Mammary epithelial cell (primary cell): ENCODE measurements at regions of chr20 and their contacts with region 1.

Region 1: GRCh38 chr20:45011108-45011526 is 44.8 kb downstream of the STK4 start:
- DNase-seq: peak; percentile 57
- H3K4me3 ChIP-seq: no peak overlapping the region
- H3K27ac ChIP-seq: peak overlapping the region; percentile 55
- H3K4me1 ChIP-seq: peaks cover 39% of the 10 kb centered on the region
- H3K27me3 ChIP-seq: no peaks in the 10 kb centered on the region
- CTCF ChIP-seq: peak; percentile 72 to 81

Region 2: DNA sequence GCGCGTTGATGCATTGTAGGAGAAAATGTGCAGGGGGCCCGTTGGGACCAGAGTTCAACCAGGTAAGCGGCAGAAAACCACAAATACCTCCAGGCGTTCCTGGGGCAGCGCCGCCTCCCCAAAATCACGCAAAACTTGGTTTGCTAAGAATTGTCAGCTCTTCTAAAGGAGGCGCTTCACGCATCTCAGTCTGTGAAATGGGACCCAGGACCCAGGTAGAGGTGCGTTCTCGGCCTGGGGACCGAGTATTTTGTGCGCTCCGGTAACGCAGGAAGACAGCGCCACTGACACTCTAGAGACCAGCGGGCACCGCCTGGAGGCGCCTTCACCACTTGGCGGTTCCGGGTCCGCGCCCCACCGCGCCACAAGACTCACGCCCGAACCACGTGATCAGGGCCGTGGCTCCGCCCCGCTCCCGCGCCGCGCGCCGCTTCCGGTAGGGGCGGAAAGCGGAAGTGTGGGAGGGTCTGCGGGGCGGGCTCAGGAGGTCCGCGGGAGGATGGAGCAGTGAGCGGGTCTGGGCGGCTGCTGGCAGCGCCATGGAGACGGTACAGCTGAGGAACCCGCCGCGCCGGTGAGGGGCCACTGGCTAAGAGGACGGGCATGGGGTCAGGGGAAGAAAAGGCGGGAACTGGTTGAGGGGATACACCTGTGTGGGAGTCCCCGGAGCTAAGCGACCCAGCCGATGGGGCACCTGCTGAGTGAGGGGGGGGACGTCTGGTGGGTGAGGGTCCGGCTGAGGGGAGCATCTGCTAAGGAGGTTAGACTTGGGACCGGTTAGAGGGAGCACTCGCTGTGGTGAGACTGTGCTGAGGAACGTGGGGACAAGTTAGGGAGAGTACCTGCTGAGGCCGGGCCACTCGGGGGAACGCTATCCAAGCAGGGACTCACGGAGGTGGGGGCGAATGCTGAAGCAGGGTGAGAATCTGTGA is 44.8 kb before region 1 on chr20 and contains the start of gene STK4:
- CTCF ChIA-PET with region 1: no interaction called
- dilution Hi-C with region 1: loop called (anchors 5 kb)
- in situ Hi-C with region 1: no loop called
- intact Hi-C with region 1: no loop called
- DNase-seq: peak; percentile 92
- H3K4me3 ChIP-seq: peak within 1 kb of the TSS; percentile 80 to 92 (median 90)
- H3K27ac ChIP-seq: peak within 1 kb of the TSS; percentile 66
- H3K4me1 ChIP-seq: peaks cover 18% of the 10 kb centered on the region
- H3K27me3 ChIP-seq: no peaks in the 10 kb centered on the region
- CTCF ChIP-seq: peak; percentile 15 to 58
- total RNA-seq, gene STK4: 30.7 to 42.7 TPM

Region 3: GRCh38 chr20:44979090-44979621 is 32.0 kb before region 1 on chr20:
- CTCF ChIA-PET with region 1: no interaction called
- dilution Hi-C with region 1: no loop called
- in situ Hi-C with region 1: no loop called
- intact Hi-C with region 1: no loop called
- DNase-seq: no peak
- H3K4me3 ChIP-seq: no peak overlapping the region
- H3K27ac ChIP-seq: no peak overlapping the region
- H3K4me1 ChIP-seq: no peaks in the 10 kb centered on the region
- H3K27me3 ChIP-seq: no peaks in the 10 kb centered on the region
- CTCF ChIP-seq: no peak

Region 4: GRCh38 chr20:45095753-45096371 is 84.7 kb after region 1 on chr20:
- CTCF ChIA-PET with region 1: interaction called, 10 read pairs
- dilution Hi-C with region 1: no loop called
- in situ Hi-C with region 1: no loop called
- intact Hi-C with region 1: loop called (anchors 1 kb)
- DNase-seq: peak; percentile 44
- H3K4me3 ChIP-seq: no peak overlapping the region
- H3K27ac ChIP-seq: no peak overlapping the region
- H3K4me1 ChIP-seq: peaks cover 10% of the 10 kb centered on the region
- H3K27me3 ChIP-seq: no peaks in the 10 kb centered on the region
- CTCF ChIP-seq: peak; percentile 65 to 84

Region 5: GRCh38 chr20:45138561-45139300 is 127.6 kb after region 1 on chr20:
- CTCF ChIA-PET with region 1: interaction called, 11 read pairs
- dilution Hi-C with region 1: no loop called
- in situ Hi-C with region 1: no loop called
- intact Hi-C with region 1: no loop called
- DNase-seq: peak; percentile 56
- H3K4me3 ChIP-seq: no peak overlapping the region
- H3K27ac ChIP-seq: no peak overlapping the region
- H3K4me1 ChIP-seq: peaks cover 3% of the 10 kb centered on the region
- H3K27me3 ChIP-seq: no peaks in the 10 kb centered on the region
- CTCF ChIP-seq: peak; percentile 88 to 91

Region 6: GRCh38 chr20:45229264-45230056 is 218.3 kb after region 1 on chr20:
- CTCF ChIA-PET with region 1: no interaction called
- dilution Hi-C with region 1: no loop called
- in situ Hi-C with region 1: no loop called
- intact Hi-C with region 1: loop called (anchors 1 kb)
- DNase-seq: peak; percentile 47
- H3K4me3 ChIP-seq: no peak overlapping the region
- H3K27ac ChIP-seq: no peak overlapping the region
- H3K4me1 ChIP-seq: no peaks in the 10 kb centered on the region
- H3K27me3 ChIP-seq: peaks cover 3% of the 10 kb centered on the region
- CTCF ChIP-seq: peak; percentile 81 to 87